GM18951 (cell line): ENCODE measurements at regions of chr6 and their contacts with region 1.

Region 1: DNA sequence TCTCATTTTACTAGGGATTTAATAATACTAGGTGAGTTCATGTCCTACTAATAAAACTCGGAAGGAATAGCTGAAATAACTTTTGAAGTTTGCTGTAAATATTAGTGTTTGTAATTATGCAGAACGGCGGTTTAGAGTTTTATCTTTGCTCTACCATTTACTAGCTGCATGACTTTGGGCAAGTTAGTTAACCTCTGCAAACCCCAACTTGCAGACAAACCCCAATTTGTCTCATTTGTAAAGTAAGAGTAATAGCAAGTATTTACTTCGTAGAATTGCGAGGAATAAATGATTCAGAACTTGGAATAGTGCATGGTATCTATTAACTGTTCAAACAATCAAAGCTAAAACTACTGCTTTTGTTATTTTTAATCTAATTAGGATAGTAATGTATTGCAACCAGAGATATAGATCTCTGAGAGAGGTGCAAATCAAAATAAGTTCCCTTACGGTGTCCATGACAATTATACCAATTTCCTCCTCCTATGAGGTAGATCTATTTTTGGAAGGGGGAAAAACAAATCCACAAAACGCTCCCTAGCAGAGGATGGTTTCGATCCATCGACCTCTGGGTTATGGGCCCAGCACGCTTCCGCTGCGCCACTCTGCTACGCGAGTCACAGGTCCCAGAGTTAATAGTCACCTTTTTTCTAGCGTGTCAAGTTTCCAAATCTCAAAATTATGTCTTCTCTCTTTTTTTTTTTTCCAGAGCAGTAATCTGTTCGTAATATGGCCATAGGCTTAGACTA is 35.1 kb upstream of the BTN3A2 start:
- POLR2A ChIP-seq: no peak

Region 2: GRCh38 chr6:26087284-26088115 is 242.4 kb before region 1 on chr6 and contains the start of gene HFE:
- in situ Hi-C with region 1: no loop called
- POLR2A ChIP-seq: no peak

Region 3: DNA sequence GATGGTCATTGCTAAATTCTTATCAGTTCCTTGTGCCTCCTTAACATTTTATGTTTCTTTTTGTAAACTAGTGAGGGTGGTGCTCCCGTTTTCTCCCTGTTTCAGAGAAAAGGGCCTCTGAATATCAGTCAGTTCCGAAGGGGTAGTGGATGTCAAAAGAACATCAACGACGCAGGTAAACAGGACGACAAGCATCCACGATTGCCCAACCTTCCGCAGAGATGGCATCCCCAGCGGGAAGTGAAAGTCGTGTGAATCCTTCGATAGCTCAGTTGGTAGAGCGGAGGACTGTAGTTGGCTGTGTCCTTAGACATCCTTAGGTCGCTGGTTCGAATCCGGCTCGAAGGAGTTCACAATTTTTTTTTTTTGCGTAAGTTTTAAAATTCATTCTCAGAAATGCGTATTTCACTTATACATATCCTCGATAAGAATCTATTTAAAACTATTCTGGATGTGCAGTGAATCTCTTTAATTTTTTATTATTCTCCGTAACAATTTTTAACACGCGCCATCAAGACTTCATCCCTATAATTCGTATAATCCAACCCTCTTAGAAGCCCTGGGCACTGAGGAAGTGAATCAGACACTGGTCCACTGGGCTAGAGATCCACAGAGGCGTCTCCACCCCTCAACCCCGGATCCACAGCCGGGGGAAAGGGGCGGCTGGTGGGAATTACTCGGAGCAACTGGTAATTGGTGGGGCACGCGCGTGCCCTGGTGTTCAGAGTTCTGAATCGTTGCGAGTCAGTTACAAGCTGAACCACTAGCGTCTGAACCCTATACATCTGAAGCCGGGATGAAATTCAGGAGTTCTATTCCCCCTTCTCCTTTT is 238.9 kb after region 1 on chr6:
- in situ Hi-C with region 1: loop called (anchors 10 kb)
- POLR2A ChIP-seq: no peak